Naive thymus-derived CD4-positive, alpha-beta T cell (primary cell): ENCODE measurements at regions of chr4 and their contacts with region 1.

Region 1: DNA sequence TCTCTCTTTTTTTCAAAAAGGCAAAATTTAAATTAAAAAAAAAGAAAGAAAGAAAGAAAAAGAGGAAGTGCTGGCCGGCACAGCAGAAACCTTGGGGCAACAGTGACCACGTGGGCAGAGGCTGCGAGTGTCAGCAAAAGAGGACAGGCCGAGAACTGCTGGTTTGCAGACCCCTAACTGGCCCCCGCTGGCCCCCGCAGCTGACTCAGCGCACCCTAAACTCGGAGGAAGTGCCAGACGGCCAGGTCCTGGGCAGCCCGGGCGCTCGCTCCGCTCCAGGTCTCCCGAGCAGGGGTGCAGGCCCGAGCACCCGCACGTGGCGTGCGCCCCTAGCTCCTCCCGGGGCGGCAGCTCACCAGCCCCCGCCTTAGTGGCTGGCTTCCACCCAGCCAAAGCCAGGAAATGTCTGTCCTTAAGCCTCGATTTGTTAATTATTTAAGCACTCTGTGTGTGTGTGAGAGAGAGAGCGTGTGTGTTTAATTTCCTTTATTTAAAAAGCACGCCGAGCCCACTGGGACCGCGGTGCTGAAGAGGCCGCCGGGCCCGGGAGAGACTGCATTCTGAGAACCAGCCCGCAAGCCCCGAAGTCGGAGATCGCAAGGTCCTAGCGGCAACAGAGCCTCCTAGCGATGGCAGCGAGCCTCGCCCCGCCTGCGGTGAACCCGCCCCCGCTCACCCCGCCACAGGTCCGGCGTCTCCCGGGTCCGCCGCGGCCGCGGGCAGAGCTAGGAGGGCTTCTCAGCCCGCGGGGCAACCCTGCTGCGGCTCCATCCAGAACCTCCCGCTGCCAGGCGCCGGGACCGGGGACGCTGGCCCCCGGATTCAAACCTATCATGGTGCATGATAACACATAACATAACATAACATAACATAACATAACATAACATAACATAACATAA is 46.0 kb upstream of the CDKN2AIP start:
- DNase-seq: peak; percentile 32 to 70 (median 57)
- ATAC-seq: peak; percentile 88
- H3K4me3 ChIP-seq: peak overlapping the region; percentile 76
- H3K4me3 Mint-ChIP-seq: peak overlapping the region; percentile 86 to 93 (median 90)
- H3K27ac ChIP-seq: peak overlapping the region; percentile 34
- H3K27ac Mint-ChIP-seq: peak overlapping the region; percentile 65 to 95 (median 82)
- H3K4me1 ChIP-seq: peaks cover 0 to 6% of the 10 kb centered on the region in 2 donors
- H3K4me1 Mint-ChIP-seq: peaks cover 17 to 34% (median 28%) of the 10 kb centered on the region in 7 donors
- H3K27me3 ChIP-seq: no peaks in the 10 kb centered on the region
- H3K27me3 Mint-ChIP-seq: peaks cover 0 to 45% (median 0%) of the 10 kb centered on the region in 5 donors

Region 2: DNA sequence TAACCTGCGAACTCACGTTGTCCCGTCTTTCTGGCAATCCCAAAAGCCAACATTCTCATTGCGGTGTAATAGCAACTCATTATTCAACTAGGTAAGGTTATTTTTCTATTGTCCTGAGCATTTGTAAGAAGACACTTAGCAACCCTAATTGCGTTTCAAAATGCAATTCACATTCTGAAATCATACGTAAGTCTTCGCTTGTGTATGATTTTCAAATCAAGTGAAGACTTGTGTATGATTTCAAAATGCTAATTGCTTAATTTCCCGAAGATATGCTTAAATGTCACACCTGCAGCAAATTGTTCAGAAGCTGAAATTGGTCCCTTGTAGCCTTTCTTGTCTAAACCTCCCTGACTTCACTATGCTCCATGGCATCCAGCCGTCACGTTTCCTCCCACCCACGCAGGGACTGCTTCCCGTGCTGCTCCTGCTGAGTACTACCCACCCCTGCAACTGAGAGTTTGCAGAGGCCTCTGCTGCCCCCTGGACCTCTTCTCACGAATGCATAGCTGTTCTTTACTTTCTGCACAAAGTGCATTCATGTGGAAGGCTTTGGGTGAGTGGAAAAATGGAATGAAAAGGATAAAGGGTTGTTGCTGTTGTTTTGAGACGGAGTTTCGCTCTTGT is 35.4 kb before region 1 on chr4:
- CTCF ChIA-PET with region 1: no interaction called
- POLR2A ChIA-PET with region 1: no interaction called
- intact Hi-C with region 1: loop called in 1 of 2 experiments (anchors 5 kb)
- DNase-seq: no peak
- ATAC-seq: no peak
- H3K4me3 ChIP-seq: no peak overlapping the region
- H3K4me3 Mint-ChIP-seq: no peak overlapping the region
- H3K27ac ChIP-seq: no peak overlapping the region
- H3K27ac Mint-ChIP-seq: no peak overlapping the region
- H3K4me1 ChIP-seq: no peaks in the 10 kb centered on the region
- H3K4me1 Mint-ChIP-seq: no peaks in the 10 kb centered on the region
- H3K27me3 ChIP-seq: no peaks in the 10 kb centered on the region
- H3K27me3 Mint-ChIP-seq: peaks cover 0 to 4% (median 0%) of the 10 kb centered on the region in 5 donors

Region 3: GRCh38 chr4:183602557-183603027 is 204.1 kb after region 1 on chr4:
- CTCF ChIA-PET with region 1: no interaction called
- POLR2A ChIA-PET with region 1: interaction called, 3 read pairs
- intact Hi-C with region 1: loop called in 1 of 2 experiments (anchors 5 kb)
- DNase-seq: peak in 5 of 9 donors; percentile 2 to 24 (median 6)
- ATAC-seq: no peak
- H3K4me3 ChIP-seq: no peak overlapping the region
- H3K4me3 Mint-ChIP-seq: no peak overlapping the region
- H3K27ac ChIP-seq: no peak overlapping the region
- H3K27ac Mint-ChIP-seq: no peak overlapping the region
- H3K4me1 ChIP-seq: no peaks in the 10 kb centered on the region
- H3K4me1 Mint-ChIP-seq: peaks cover 0 to 3% (median 0%) of the 10 kb centered on the region in 7 donors
- H3K27me3 ChIP-seq: no peaks in the 10 kb centered on the region
- H3K27me3 Mint-ChIP-seq: peaks cover 0 to 8% (median 4%) of the 10 kb centered on the region in 5 donors